HepG2 (cell line): ENCODE measurements at regions of chr1 and their contacts with region 1.

Region 1: GRCh38 chr1:156689035-156689952 is 12.1 kb upstream of the NES start:
- DNase-seq: peak; percentile 75
- ATAC-seq: peak; percentile 93
- H3K4me3 ChIP-seq: peak overlapping the region; percentile 41 to 65 (median 43); a peak in 5 of 6 replicates
- H3K27ac ChIP-seq: no peak overlapping the region
- H3K4me1 ChIP-seq: peaks cover 40% of the 10 kb centered on the region
- H3K27me3 ChIP-seq: peaks cover 18 to 49% of the 10 kb centered on the region in 2 experiments; a peak in 4 of 5 replicates
- CTCF ChIP-seq: peak; percentile 98
- EP300 ChIP-seq: no peak
- POLR2A ChIP-seq: no peak
- RAD21 ChIP-seq: peak; percentile 87

Region 2: GRCh38 chr1:156705918-156706656 is 16.8 kb after region 1 on chr1:
- CTCF ChIA-PET with region 1: interaction called, 30 read pairs
- POLR2A ChIA-PET with region 1: interaction called, 8 read pairs
- in situ Hi-C with region 1: no loop called
- intact Hi-C with region 1: loop called (anchors 1 kb)
- DNase-seq: peak; percentile 23
- ATAC-seq: peak; percentile 53
- H3K4me3 ChIP-seq: peak overlapping the region; percentile 41 to 66 (median 52)
- H3K27ac ChIP-seq: no peak overlapping the region
- H3K4me1 ChIP-seq: peaks cover 25% of the 10 kb centered on the region
- H3K27me3 ChIP-seq: peaks cover 11 to 79% of the 10 kb centered on the region in 2 experiments
- CTCF ChIP-seq: peak; percentile 73
- EP300 ChIP-seq: no peak
- POLR2A ChIP-seq: no peak
- RAD21 ChIP-seq: peak; percentile 44

Region 3: DNA sequence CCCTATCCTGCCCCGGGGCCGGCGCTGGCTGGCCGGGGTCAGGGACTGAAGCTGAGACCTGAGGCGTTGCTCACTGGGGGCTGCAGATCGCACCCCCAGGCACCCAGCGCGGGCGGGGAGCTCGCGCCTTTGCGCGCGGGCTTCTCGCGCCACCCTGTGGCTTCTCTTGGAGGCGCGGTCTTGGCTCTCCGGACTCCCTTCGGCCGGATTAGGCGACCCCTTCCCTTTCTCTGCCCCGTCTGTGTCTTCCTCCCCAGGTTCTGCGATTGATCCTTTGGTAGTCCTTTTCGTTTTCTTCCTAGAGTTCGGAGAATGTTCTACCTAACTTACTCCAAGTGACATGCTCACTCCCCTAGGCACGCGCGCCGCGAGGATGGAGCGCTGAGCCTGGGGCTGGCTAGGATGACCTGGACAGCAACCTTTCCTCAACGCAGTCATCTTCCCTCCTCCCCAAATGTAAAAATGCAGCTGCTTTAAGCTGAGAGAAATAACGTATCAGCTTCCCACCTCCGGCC is 170.9 kb after region 1 on chr1:
- CTCF ChIA-PET with region 1: interaction called, 6 read pairs
- POLR2A ChIA-PET with region 1: interaction called, 4 read pairs
- in situ Hi-C with region 1: loop called (anchors 10 kb)
- intact Hi-C with region 1: no loop called
- DNase-seq: no peak
- ATAC-seq: peak; percentile 74
- H3K4me3 ChIP-seq: peak overlapping the region in 1 of 3 experiments; percentile 55; a peak in 1 of 6 replicates
- H3K27ac ChIP-seq: no peak overlapping the region
- H3K4me1 ChIP-seq: peaks cover 24% of the 10 kb centered on the region
- H3K27me3 ChIP-seq: peaks cover 25 to 87% of the 10 kb centered on the region in 2 experiments
- CTCF ChIP-seq: peak; percentile 84
- EP300 ChIP-seq: no peak
- POLR2A ChIP-seq: no peak
- RAD21 ChIP-seq: peak; percentile 83

Region 4: DNA sequence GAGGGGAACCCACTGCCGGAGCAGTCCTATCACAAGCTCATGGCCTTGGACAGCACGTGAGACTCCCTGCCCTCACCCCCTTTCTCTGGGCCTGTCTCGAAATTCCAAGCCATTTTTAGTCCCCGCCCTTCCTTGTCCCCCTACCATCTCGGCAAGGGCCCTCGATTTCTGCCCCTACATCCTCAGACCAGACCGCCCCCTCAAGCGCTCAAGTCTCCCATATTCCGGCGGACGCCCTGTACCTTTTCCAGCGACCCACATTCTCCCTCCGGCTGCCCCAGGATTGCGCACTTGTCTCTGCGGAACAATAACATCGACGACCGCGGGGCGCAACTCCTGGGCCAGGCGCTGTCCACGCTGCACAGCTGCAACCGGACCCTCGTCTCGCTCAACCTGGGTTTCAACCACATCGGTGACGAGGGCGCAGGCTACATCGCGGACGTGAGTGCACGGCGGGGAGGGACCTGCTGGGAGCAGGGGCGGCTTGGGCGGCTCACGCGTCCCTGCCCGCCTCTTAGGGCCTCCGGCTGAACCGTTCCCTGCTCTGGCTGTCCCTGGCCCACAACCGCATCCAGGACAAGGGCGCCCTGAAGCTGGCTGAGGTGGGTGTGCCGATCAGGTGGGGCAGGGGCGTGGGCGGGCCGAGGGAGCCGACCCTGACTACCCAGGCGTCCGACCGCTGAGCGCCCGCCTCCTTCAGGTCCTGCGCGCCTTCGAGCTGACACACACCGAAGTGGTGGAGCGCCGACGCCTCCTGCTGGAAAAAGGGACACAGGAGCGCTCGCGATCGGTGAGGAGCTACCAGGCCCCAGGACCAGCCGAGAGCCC is 238.1 kb after region 1 on chr1:
- CTCF ChIA-PET with region 1: no interaction called
- POLR2A ChIA-PET with region 1: no interaction called
- in situ Hi-C with region 1: loop called (anchors 10 kb)
- intact Hi-C with region 1: no loop called
- DNase-seq: peak; percentile 48
- ATAC-seq: peak; percentile 86
- H3K4me3 ChIP-seq: peak overlapping the region; percentile 16 to 65 (median 49); a peak in 3 of 6 replicates
- H3K27ac ChIP-seq: no peak overlapping the region
- H3K4me1 ChIP-seq: peaks cover 20% of the 10 kb centered on the region
- H3K27me3 ChIP-seq: peaks cover 19 to 77% of the 10 kb centered on the region in 2 experiments; a peak in 4 of 5 replicates
- CTCF ChIP-seq: peak; percentile 91
- EP300 ChIP-seq: no peak
- POLR2A ChIP-seq: no peak
- RAD21 ChIP-seq: peak; percentile 82

Region 5: GRCh38 chr1:157646144-157646543 is 956.9 kb after region 1 on chr1:
- CTCF ChIA-PET with region 1: no interaction called
- POLR2A ChIA-PET with region 1: no interaction called
- in situ Hi-C with region 1: no loop called
- intact Hi-C with region 1: no loop called
- DNase-seq: no peak
- ATAC-seq: no peak
- H3K4me3 ChIP-seq: no peak overlapping the region
- H3K27ac ChIP-seq: no peak overlapping the region
- H3K4me1 ChIP-seq: no peaks in the 10 kb centered on the region
- H3K27me3 ChIP-seq: no peaks in the 10 kb centered on the region
- CTCF ChIP-seq: no peak
- EP300 ChIP-seq: no peak
- POLR2A ChIP-seq: no peak
- RAD21 ChIP-seq: no peak